Esophagus muscularis mucosa (tissue), 4 donors: ENCODE measurements at regions of chr6 and their contacts with region 1.

Region 1: DNA sequence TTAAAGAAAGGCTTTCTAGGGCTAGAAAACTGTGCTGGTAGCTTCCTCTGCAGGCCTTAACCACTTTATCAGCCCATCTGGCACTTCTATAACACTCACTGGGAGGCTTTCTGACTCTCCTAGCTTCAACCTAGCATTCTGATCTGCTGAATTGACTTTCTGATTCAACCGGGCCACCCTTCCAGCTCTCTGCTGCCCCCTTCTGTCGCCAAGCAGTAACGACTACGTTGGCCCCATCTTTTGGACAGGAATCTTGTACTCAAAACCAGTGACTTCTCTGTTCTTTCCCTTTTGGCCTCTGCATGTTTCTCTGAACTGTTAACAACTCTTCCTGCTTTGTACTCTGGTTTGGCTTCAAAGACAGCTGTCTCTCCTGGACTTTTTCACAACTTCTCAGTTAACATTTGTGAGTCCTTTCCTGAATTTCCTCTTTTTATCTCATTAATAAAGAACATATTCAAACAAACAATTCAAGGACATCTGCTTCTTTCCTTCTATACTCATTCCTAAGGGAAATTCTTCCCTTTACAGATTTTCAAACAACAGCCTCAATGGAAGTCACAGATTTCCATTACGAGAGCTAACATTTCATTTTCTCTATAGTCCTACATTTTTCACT is 43.9 kb upstream of the FAM135A start:
- DNase-seq: no peak
- H3K4me3 ChIP-seq: no peak overlapping the region
- H3K27ac ChIP-seq: no peak overlapping the region
- H3K4me1 ChIP-seq: peaks cover 0 to 2% (median 0%) of the 10 kb centered on the region in 4 donors
- H3K27me3 ChIP-seq: no peaks in the 10 kb centered on the region
- CTCF ChIP-seq: peak; percentile 74 to 92 (median 79)
- EP300 ChIP-seq: no peak
- POLR2A ChIP-seq: no peak

Region 2: DNA sequence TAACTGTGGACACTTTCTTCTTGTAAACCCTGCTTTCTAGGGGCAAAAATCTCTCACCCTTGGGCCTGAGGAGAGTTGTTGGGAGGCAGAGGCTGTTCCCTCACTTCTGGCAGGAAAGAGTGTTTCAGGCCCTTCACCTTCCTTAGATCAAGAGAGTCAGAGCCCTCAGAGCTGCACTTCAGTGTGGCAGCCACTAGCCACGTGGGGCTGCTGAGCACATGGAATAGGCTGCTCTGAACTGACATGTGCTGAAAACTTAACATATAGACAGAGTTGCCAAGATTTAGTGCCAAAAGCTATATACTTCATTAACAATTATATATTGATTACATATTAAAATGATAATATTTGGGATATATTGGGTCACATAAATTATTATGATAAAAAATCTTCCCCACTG is 568.2 kb before region 1 on chr6:
- intact Hi-C with region 1: no loop called
- DNase-seq: no peak
- H3K4me3 ChIP-seq: no peak overlapping the region
- H3K27ac ChIP-seq: no peak overlapping the region
- H3K4me1 ChIP-seq: peaks cover 0 to 9% (median 8%) of the 10 kb centered on the region in 4 donors
- H3K27me3 ChIP-seq: no peaks in the 10 kb centered on the region
- CTCF ChIP-seq: no peak
- EP300 ChIP-seq: no peak
- POLR2A ChIP-seq: no peak

Region 3: DNA sequence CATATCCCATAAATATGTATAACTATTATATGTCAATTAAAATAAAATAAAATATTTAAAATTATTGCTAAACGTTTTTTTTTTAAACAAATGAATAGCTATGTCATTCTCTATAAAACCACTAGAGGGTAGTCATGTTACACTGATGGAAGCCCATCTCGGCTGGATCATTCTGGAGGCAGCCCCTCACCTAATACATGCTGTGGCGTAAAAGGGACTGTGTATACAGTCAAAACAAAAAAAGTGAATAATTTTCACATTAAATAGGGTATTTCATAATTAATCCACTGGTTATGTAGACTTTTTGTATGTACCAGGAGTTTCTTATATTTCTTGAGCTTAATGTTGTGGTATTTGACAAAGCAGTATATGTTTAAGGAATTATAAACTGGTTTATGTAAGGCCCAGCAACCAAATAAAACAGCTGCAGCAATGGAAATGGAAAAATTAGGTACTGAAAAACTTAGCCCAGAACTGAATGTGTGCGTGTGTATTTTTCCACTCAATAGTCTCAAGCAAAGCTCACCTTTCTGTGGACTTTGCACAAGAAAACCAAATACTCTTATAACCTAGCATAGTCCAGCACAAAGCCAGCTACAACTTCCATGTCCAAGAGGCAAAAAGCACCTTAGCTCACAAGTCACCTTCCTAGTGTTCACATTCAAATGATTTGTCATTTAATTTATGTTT is 148.3 kb before region 1 on chr6:
- intact Hi-C with region 1: loop called (anchors 5 kb)
- DNase-seq: no peak
- H3K4me3 ChIP-seq: no peak overlapping the region
- H3K27ac ChIP-seq: no peak overlapping the region
- H3K4me1 ChIP-seq: peaks cover 0 to 6% (median 1%) of the 10 kb centered on the region in 4 donors
- H3K27me3 ChIP-seq: peaks cover 0 to 4% (median 0%) of the 10 kb centered on the region in 4 donors
- CTCF ChIP-seq: peak; percentile 67 to 84 (median 80)
- EP300 ChIP-seq: no peak
- POLR2A ChIP-seq: no peak

Region 4: DNA sequence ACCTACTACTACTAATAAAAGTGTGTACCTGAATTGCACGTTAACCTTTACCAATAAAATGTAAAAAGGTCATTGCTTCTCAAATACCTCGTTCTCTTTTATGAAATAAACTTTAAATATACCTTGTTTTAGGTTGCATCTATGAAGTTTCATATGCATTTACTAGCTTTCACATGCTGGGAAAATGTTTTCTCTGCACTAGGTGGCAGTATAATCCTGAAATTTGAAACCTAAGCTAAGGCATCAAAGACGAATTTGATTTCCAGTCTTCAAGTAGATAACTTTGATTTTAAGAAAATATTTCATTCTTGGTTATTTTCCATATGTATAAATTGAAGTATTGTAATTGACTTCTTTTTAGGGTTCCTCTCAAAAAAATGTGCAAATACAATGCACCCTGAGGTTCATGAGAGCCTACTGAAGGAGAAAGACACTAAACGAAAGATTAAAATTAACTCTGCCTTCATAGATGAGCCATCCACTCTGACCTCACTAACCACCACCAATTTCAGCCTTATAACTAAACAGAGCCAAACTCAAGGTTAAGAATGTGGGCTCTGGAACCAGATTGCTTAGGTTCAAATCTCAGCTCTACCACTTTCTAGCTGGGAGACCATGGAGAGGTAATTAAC is 59.3 kb before region 1 on chr6:
- intact Hi-C with region 1: loop called (anchors 5 kb)
- DNase-seq: no peak
- H3K4me3 ChIP-seq: no peak overlapping the region
- H3K27ac ChIP-seq: no peak overlapping the region
- H3K4me1 ChIP-seq: no peaks in the 10 kb centered on the region
- H3K27me3 ChIP-seq: peaks cover 0 to 8% (median 0%) of the 10 kb centered on the region in 4 donors
- CTCF ChIP-seq: peak; percentile 44 to 54 (median 50)
- EP300 ChIP-seq: no peak
- POLR2A ChIP-seq: no peak

Region 5: DNA sequence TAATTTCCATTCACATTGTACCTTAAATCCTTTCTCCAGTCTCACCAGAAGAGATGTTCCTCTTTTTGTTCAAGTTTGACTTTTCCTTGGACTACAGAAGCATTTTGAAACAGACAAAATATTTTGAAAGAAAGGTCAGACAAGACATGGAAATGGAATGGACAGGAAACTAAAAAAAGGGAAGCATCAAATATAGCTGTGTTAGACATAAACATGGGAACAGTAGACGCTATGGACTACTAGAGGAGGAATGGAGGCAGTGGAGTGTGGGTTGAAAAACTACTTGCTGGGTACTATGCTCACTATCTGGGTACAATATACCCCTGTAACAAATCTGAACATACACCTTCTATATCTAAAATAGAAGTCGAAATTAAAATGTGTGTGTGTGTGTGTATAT is 39.8 kb after region 1 on chr6:
- intact Hi-C with region 1: no loop called
- DNase-seq: no peak
- H3K4me3 ChIP-seq: no peak overlapping the region
- H3K27ac ChIP-seq: no peak overlapping the region
- H3K4me1 ChIP-seq: peaks cover 7 to 8% (median 8%) of the 10 kb centered on the region in 4 donors
- H3K27me3 ChIP-seq: no peaks in the 10 kb centered on the region
- CTCF ChIP-seq: no peak
- EP300 ChIP-seq: no peak
- POLR2A ChIP-seq: no peak